ENCODE measurements at regions of chr1 and their contacts with region 1.

Region 1: GRCh38 chr1:169538998-169539871 is 47.0 kb downstream of the F5 start:
- DNase-seq: peak; percentile 63
- H3K4me3 Mint-ChIP-seq: no peak overlapping the region
- H3K27ac Mint-ChIP-seq: peak overlapping the region; percentile 4
- H3K4me1 Mint-ChIP-seq: peaks cover 26% of the 10 kb centered on the region
- H3K27me3 Mint-ChIP-seq: no peaks in the 10 kb centered on the region
- CTCF ChIP-seq: no peak

Region 2: DNA sequence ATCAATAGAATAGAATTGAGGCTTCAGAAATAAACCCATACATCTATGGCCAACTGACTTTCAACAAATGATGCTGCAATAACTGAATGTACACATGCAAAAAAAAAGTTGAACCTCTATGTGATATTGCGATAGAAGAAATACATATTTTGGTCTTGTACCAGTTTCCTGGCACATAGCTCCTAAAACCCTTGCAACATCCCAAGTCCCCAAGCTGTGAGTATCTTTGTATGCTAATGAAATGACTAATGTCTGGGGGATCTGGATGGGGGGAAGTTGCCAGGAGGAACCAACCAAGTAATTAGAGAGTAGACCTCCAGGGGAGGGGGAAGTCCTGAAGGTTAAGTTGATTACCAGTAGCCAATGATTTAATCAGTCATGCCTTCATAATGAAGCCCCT is 146.8 kb before region 1 on chr1:
- CTCF ChIA-PET with region 1: no interaction called
- intact Hi-C with region 1: no loop called
- DNase-seq: no peak
- H3K4me3 Mint-ChIP-seq: no peak overlapping the region
- H3K27ac Mint-ChIP-seq: no peak overlapping the region
- H3K4me1 Mint-ChIP-seq: peaks cover 10% of the 10 kb centered on the region
- H3K27me3 Mint-ChIP-seq: no peaks in the 10 kb centered on the region
- CTCF ChIP-seq: no peak

Region 3: DNA sequence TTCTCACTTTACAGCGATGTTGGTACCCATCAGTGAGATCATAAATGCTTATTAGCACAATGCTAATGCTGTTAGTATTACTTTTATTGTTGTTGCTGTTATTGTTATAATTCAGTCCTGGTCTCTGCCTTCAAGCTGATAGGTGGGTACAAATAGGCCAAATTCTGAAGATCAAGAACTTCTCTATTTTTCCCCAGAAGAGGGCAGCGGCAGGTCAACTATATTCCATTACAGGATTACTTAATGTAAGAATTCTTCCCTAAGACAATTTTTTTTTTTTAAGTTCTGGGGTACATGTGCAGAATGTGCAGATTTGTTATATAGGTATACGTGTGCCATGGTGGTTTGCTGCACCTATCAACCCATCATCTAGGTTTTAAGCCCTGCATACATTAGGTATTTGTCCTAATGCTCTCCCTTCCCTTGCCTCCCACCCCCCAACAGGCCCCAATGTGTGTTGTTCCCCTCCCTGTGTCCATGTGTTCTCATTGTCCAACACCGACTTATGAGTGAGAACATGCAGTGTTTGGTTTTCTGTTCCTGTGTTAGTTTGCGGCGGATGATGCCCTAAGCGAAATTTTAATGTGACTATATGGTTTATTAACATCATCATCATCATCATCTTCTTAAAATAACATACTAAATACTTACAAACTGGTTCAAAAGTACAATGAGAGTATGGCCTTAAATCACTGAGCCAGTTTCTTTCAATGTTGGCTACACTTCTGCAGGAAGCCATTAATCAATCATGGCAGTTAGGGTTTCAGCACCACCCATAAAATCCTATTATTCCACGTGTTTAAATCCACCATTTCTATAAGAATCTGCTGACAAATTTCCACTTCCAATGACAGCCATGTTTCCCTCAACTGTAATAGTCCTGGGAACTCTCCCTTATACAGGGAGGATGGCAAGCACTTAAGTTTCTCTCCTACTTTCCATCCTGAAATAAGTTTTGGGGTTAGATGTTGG is 72.7 kb before region 1 on chr1:
- CTCF ChIA-PET with region 1: no interaction called
- intact Hi-C with region 1: loop called (anchors 2 kb)
- DNase-seq: peak; percentile 56
- H3K4me3 Mint-ChIP-seq: no peak overlapping the region
- H3K27ac Mint-ChIP-seq: no peak overlapping the region
- H3K4me1 Mint-ChIP-seq: peaks cover 2% of the 10 kb centered on the region
- H3K27me3 Mint-ChIP-seq: no peaks in the 10 kb centered on the region
- CTCF ChIP-seq: peak; percentile 59

Region 4: DNA sequence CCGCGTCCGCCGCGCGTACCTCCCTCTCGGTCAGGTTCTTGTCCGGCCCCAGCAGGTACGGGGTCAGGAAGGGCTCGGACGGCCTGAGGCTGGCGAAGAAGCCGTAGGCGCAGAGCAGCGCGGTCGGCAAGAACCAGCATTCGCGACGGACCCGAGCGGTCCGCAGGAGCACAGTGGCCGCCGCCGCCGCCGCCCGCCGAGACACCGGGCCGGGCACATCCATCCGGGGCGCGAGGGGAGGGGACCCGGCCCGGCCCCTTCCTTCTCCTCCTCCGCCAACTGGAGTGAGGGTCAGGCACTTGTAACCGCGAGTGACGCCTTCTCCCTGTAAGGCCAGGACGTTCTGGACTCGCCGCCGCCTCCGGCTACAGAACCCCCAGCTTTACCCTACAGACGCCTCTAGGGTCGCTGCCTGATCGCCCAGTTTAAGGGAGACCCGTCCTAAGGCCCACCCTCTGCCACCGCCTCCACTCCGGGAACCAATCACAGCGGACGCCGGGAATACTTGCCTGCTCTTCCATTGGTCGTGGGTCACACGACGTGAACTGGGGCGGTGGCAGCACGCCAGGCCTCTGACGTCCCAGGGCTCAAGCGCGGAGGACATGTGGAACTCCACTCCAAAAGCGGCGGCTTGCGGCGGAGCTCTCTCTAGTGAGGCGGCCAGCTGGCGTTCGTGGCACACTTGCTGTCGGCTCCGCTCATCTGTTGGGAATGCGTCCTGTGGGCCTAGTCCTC is 53.5 kb before region 1 on chr1 and contains the start of gene SLC19A2:
- CTCF ChIA-PET with region 1: no interaction called
- intact Hi-C with region 1: loop called (anchors 2 kb)
- DNase-seq: peak; percentile 99
- H3K4me3 Mint-ChIP-seq: peak within 1 kb of the TSS; percentile 87
- H3K27ac Mint-ChIP-seq: peak within 1 kb of the TSS; percentile 99
- H3K4me1 Mint-ChIP-seq: peaks cover 62% of the 10 kb centered on the region
- H3K27me3 Mint-ChIP-seq: no peaks in the 10 kb centered on the region
- CTCF ChIP-seq: peak; percentile 49
- total RNA-seq, gene SLC19A2: 22.0 and 24.2 TPM in 2 replicates

Region 5: GRCh38 chr1:169853341-169853740 is 314.1 kb after region 1 on chr1:
- CTCF ChIA-PET with region 1: no interaction called
- intact Hi-C with region 1: no loop called
- DNase-seq: no peak
- H3K4me3 Mint-ChIP-seq: no peak overlapping the region
- H3K27ac Mint-ChIP-seq: no peak overlapping the region
- H3K4me1 Mint-ChIP-seq: no peaks in the 10 kb centered on the region
- H3K27me3 Mint-ChIP-seq: no peaks in the 10 kb centered on the region
- CTCF ChIP-seq: no peak